ENCODE measurements at regions of chr1 and their contacts with region 1.

Region 1: DNA sequence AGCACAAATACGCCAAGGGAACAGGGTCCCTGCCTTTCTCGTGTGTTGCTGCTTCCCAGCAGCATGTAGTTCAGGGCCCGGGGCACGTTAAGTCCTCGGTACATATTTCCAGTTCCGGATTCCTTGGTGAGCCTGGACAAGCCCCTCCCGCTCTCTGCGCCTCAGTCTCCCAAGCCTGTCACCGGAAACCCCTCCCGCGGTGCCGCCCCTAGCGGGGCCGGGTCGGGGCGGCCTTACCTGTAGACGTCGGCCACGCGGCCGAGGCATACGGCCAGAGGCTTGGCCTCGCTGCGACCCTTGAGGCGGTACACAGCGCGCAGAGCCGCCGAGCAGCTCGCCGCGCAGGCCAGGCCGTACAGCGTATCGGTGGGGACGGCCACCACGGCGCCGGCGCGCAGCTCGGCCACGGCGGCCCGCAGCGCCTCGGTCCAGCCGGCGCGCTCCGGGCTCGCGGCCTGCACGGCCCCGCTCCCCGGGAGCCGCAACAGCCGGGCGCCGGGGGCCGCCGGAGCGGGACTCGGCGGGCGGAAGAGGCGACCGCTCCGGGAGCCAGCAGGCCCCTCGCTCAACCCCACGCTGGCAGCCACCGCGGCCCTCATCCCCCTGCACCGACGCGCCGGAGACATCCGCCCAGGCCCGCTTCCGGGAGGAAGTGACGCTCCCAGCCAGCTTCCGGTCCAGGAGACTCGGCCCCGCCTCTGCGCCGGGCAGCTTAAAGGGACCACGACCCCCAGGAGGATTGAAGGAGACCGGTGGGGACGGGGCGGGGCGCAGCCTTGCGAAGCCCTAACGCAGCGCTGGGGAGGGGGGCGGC is at the starts of genes C1orf122 and YRDC:
- DNase-seq: peak; percentile 98
- H3K4me3 ChIP-seq: peak within 1 kb of the TSS; percentile 89 to 98 (median 96)
- H3K27ac ChIP-seq: peak within 1 kb of the TSS; percentile 87 to 98 (median 94)
- H3K4me1 ChIP-seq: peaks cover 24 to 69% (median 48%) of the 10 kb centered on the region in 6 donors
- H3K27me3 ChIP-seq: no peaks in the 10 kb centered on the region
- CTCF ChIP-seq: no peak
- POLR2A ChIP-seq: peak; percentile 60 to 79 (median 74)
- total RNA-seq, gene C1orf122: 15.9 to 31.1 (median 19.5) TPM
- total RNA-seq, gene YRDC: 8.0 to 13.4 (median 10.9) TPM

Region 2: DNA sequence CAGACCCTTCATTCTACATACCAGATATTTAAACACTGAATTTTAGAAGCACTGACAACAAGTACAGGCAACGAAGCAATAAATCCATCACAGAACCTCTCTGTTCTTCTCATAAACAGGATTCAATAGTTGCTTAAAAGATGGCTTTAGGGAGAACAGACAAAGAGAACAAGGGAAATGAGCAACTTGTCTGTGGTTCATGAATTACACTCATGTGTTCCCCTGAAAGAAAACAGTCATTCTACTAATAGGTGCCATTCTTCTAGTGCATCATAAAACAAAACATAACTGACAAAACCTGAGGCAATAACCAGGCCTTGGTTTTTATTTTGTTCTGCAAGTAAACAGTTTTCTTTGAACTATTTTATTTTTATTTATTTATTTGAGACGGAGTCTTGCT is 218.8 kb before region 1 on chr1:
- intact Hi-C with region 1: no loop called
- DNase-seq: no peak
- H3K4me3 ChIP-seq: no peak overlapping the region
- H3K27ac ChIP-seq: no peak overlapping the region
- H3K4me1 ChIP-seq: peaks cover 2 to 13% (median 6%) of the 10 kb centered on the region in 6 donors
- H3K27me3 ChIP-seq: no peaks in the 10 kb centered on the region
- CTCF ChIP-seq: no peak
- POLR2A ChIP-seq: no peak

Region 3: GRCh38 chr1:37859507-37860345 is 52.0 kb after region 1 on chr1 and contains the start of gene MTF1:
- intact Hi-C with region 1: loop called (anchors 5 kb)
- DNase-seq: peak; percentile 99
- H3K4me3 ChIP-seq: peak within 1 kb of the TSS; percentile 77 to 100 (median 98)
- H3K27ac ChIP-seq: peak within 1 kb of the TSS; percentile 85 to 98 (median 92)
- H3K4me1 ChIP-seq: peaks cover 29 to 55% (median 49%) of the 10 kb centered on the region in 6 donors
- H3K27me3 ChIP-seq: no peaks in the 10 kb centered on the region
- CTCF ChIP-seq: peak; percentile 84 to 95 (median 89)
- POLR2A ChIP-seq: peak in 1 of 3 donors; percentile 42
- total RNA-seq, gene MTF1: 9.3 to 49.8 (median 26.6) TPM

Region 4: DNA sequence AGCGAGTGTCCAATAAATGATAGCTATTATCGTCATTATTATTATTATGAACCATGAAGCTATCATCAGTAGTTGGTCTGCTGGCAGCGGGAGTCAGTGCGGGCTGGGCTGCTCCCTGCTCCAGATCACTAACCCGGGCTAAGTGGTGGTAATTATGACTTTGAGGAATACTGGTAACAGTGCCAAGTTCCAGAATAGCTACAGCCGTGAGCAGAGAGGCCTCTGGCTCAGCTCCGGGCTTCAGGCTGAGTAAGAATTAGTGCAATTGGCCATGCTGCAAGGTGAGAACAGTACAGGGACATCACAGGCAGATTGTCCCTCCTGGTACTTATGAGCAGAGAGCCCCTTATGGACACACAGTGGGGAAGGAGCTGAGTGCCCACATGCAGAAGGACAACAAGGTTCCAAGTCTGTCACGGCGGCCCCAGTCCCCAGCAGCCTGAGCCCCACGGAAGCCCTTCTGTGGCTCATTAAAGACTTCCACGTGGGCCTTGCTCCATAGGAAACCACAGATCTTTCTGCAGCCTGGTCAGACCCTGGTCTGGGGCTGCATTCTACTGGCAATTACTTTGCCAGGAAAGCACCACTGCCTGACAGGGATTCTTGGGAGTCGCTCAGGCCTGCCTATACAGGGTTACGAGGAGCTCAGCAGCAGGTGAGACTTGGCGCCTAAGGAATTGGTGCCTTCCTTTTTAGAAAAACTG is 816.7 kb after region 1 on chr1:
- intact Hi-C with region 1: no loop called
- DNase-seq: no peak
- H3K4me3 ChIP-seq: no peak overlapping the region
- H3K27ac ChIP-seq: no peak overlapping the region
- H3K4me1 ChIP-seq: no peaks in the 10 kb centered on the region
- H3K27me3 ChIP-seq: peaks cover 0 to 13% (median 0%) of the 10 kb centered on the region in 7 donors
- CTCF ChIP-seq: no peak
- POLR2A ChIP-seq: no peak

Measured in spleen (tissue), 13 donors.